Right ventricle myocardium inferior (tissue), 1 donor: ENCODE measurements at regions of chr3 and their contacts with region 1.

Region 1: GRCh38 chr3:138118612-138119422 is 3.4 kb upstream of the DZIP1L start:
- DNase-seq: no peak
- ATAC-seq: peak; percentile 58

Region 2: DNA sequence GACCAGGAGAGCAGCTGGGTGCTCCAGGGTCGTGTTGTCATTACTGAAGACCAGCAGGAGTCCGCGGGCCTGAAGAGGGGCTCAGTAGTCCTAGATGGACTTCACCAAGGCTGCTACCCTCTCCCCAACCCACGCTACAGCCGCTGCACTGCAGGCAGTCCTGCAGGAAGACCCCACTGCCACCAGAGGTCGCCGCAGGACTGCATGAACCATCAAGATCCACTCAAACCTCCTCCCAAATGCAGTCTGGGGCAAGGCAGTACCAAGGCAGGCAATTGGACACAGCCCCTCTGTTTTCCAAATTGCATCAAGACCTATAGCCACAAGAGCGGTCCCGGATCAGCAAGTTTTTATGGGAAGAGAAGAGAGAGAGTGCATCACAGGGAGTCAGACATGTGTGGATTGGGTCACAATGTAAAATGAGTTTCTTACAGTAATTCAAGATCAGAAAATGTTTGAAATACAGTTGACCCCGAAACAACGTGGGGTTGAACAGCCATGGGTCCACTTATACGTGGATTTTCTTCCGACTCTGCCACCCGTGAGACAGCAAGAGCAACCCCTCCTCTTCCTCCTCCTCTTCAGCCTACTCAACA is 50.1 kb before region 1 on chr3:
- intact Hi-C with region 1: loop called (anchors 1 kb)
- DNase-seq: peak; percentile 88
- ATAC-seq: peak; percentile 89